Psoas muscle (tissue), 8 donors: ENCODE measurements at regions of chr2 and their contacts with region 1.

Region 1: DNA sequence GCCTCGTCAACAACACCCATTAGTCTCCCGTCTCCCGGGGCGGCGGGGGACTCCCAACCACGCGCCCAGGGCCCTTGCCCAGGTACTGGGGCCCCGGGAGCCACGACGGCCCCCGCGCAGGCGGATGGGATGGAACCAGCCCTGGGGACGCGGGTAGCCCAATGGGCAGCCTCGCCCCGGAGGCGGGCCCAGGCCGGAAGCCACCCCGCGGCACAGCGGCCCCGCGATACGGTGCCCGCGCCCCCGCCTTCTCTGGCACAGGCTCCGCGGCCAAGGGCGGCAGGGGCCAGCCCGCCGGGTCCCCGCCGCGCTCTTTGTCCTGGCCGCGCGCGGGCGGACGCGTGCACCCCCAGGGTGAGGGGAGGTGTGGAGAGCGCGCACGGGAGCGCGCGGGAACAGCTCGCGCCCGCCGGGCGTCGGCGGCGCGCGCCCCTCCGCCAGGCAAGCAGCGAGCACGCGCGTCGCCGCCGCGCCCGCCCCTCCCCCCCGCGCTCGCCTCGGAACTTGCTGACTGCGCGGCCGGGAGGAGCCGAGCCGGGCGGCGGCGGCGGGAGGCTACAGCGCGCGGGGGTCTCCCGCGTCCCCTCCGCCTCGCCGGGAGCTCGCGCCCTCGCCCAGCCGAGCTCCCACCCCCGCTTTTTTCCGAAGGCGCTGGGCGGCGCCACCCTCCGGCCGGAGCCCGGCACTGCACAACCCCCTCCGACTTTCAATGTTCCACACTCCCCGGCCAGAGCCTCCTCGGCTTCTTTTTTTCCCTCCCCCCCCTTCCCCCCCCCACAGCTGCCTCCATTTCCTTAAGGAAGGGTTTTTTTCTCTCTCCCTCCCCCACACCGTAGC is at the start of gene UBE2E3:
- DNase-seq: peak; percentile 85 to 91
- ATAC-seq: peak; percentile 84 to 93 (median 90)
- H3K4me3 ChIP-seq: peak within 1 kb of the TSS; percentile 86
- H3K27ac ChIP-seq: peak within 1 kb of the TSS; percentile 90
- H3K4me1 ChIP-seq: peaks cover 30% of the 10 kb centered on the region
- H3K27me3 ChIP-seq: no peaks in the 10 kb centered on the region
- CTCF ChIP-seq: peak; percentile 57
- total RNA-seq, gene UBE2E3: 68.3 to 125 (median 89.0) TPM

Region 2: DNA sequence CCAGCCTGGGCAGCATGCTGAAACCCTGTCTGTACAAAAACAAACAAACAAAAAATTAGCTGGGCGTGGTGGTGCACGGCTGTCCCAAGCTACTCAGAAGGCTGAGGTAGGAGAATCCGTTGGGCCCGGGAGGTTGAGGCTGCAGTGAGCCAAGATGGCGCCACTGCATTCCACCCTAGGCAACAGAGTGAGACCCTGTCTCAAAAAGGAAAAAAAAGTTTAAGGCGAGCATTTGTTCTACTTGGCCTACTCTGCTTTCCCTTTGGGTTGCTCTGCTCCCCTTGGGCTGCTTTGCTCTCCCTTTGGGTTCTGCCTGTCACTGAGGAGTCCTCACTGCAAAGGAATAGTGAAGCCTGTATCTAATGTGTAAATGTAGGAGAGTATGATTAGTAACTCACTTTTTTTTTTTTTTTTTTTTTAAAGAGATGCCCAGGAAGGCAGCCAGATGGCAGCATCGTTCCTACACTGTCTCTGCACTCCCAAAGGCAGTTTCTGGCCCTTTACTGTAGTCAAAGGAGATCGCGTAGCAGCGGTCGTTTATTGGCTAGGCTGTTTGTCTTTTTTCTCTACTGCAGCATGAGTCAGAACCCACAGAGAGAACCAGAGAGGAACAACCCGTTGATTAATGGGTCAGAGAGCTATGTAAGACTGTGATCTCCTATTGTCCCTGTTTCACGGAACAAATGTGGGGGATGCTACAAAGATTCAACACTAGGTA is 854.9 kb before region 1 on chr2:
- intact Hi-C with region 1: loop called (anchors 10 kb)
- DNase-seq: peak; percentile 36 to 67
- ATAC-seq: peak; percentile 87 to 96 (median 90)
- H3K4me3 ChIP-seq: no peak overlapping the region
- H3K27ac ChIP-seq: no peak overlapping the region
- H3K4me1 ChIP-seq: no peaks in the 10 kb centered on the region
- H3K27me3 ChIP-seq: no peaks in the 10 kb centered on the region
- CTCF ChIP-seq: peak; percentile 52

Region 3: GRCh38 chr2:180730976-180731375 is 249.3 kb before region 1 on chr2:
- intact Hi-C with region 1: loop called in 1 of 2 experiments (anchors 10 kb)
- DNase-seq: no peak
- ATAC-seq: no peak
- H3K4me3 ChIP-seq: no peak overlapping the region
- H3K27ac ChIP-seq: no peak overlapping the region
- H3K4me1 ChIP-seq: peaks cover 20% of the 10 kb centered on the region
- H3K27me3 ChIP-seq: no peaks in the 10 kb centered on the region
- CTCF ChIP-seq: no peak

Region 4: GRCh38 chr2:180761224-180761623 is 219.1 kb before region 1 on chr2:
- intact Hi-C with region 1: loop called in 1 of 2 experiments (anchors 5 kb)
- DNase-seq: no peak
- ATAC-seq: peak; percentile 85 to 95 (median 88)
- H3K4me3 ChIP-seq: peak overlapping the region; percentile 19
- H3K27ac ChIP-seq: peak overlapping the region; percentile 61
- H3K4me1 ChIP-seq: peaks cover 13% of the 10 kb centered on the region
- H3K27me3 ChIP-seq: no peaks in the 10 kb centered on the region
- CTCF ChIP-seq: no peak